ENCODE measurements at regions of chr2 and their contacts with region 1.

Region 1: DNA sequence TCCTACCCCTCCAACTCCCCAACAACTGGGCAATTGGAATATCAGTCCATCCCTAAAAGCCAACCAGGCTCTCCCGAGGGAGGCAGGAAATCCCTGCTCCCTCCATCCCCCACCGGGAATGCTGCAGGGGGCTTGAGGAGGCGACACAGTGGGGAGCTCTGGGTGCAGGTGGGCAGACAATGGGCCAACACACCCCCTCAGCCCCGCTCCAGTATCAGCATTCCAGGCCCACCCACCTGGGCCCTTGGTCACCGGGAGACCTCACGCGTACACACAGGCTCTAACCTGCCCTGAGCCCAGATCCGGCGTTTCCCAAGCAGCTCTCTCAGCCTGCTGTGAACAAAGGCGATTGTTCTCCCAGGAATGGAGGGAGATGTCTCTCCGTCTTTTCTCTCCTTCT is 37.6 kb upstream of the FZD7 start:
- DNase-seq: peak; percentile 79 to 94
- H3K4me3 ChIP-seq: peak overlapping the region in 1 of 4 experiments; percentile 26; a peak in 1 of 8 replicates
- H3K27ac ChIP-seq: peak overlapping the region; percentile 58
- H3K4me1 ChIP-seq: peaks cover 9 to 24% (median 22%) of the 10 kb centered on the region in 4 experiments
- H3K27me3 ChIP-seq: no peaks in the 10 kb centered on the region; a peak in 1 of 7 replicates
- CTCF ChIP-seq: no peak
- EP300 ChIP-seq: peak; percentile 52 to 95; a peak in 2 of 3 replicates
- POLR2A ChIP-seq: no peak
- RAD21 ChIP-seq: peak in 1 of 2 experiments; percentile 9; a peak in 1 of 4 replicates

Region 2: DNA sequence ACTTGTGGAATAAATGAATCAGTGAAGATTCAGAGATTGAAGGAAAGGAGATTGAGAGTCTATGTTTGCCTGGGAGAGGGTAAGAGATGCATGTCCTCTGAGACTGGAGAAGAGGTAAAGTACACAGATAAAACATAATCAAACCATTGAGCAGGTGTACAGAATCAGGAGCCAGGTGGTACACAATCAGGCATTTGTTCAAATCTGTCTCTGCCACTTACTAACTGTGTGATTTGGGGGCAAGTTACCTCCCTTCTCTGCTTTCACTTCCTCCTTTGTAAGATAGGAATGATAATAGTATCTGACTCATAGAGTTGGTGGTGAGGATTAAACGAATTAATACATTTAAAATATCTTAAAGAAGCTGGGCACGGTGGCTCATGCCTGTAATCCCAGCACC is 95.6 kb before region 1 on chr2:
- CTCF ChIA-PET with region 1: no interaction called
- POLR2A ChIA-PET with region 1: no interaction called
- DNase-seq: no peak
- H3K4me3 ChIP-seq: no peak overlapping the region
- H3K27ac ChIP-seq: no peak overlapping the region
- H3K4me1 ChIP-seq: peaks cover 5 to 9% (median 7%) of the 10 kb centered on the region in 4 experiments; a peak in 4 of 7 replicates
- H3K27me3 ChIP-seq: no peaks in the 10 kb centered on the region
- CTCF ChIP-seq: no peak
- EP300 ChIP-seq: no peak
- POLR2A ChIP-seq: no peak
- RAD21 ChIP-seq: no peak

Region 3: GRCh38 chr2:202023198-202023903 is 27.3 kb after region 1 on chr2:
- CTCF ChIA-PET with region 1: interaction called, 7 read pairs
- POLR2A ChIA-PET with region 1: interaction called, 18 read pairs
- DNase-seq: peak; percentile 71 to 84
- H3K4me3 ChIP-seq: peak overlapping the region in 1 of 4 experiments; percentile 44; a peak in 2 of 8 replicates
- H3K27ac ChIP-seq: peak overlapping the region; percentile 66; the same call in 1 of the 2 replicates
- H3K4me1 ChIP-seq: peaks cover 13 to 28% (median 25%) of the 10 kb centered on the region in 4 experiments
- H3K27me3 ChIP-seq: peaks cover 0 to 3% (median 0%) of the 10 kb centered on the region in 4 experiments; a peak in 3 of 7 replicates
- CTCF ChIP-seq: peak in 2 of 3 experiments; percentile 2 to 16; a peak in 1 of 4 replicates
- EP300 ChIP-seq: peak in 1 of 2 experiments; percentile 64; a peak in 1 of 3 replicates
- POLR2A ChIP-seq: no peak
- RAD21 ChIP-seq: peak; percentile 9 to 35; a peak in 2 of 4 replicates

Region 4: DNA sequence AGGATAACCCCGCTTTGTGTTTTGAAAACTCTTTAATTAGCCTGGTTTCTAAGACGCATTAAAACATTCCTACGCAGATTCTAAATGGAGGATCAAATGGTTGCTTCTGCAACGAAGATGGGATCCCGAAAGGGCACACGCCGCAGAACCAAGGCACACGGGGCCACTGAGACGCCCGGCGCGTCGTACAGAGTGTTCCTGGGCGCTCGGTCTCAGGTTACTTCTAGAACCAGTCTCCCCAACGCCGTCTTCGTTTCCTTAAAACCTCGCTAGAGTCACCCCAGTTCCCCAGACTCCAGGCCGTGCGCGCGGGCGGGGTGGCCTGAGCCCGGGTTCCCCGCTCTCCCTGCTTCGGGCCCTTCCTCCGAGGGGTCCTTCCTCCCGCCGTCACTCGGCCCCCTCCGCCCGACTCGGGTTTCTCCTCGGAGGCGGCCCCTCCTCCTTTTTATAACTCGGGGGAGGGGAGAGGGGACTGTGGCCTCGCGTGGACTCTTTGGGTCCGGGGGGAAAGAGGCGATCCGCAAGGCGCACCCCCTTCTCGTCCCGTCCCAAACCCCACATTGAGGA is 36.8 kb after region 1 on chr2:
- CTCF ChIA-PET with region 1: interaction called, 3 read pairs
- POLR2A ChIA-PET with region 1: interaction called, 21 read pairs
- DNase-seq: peak in 1 of 2 experiments; percentile 84
- H3K4me3 ChIP-seq: peak overlapping the region; percentile 85 to 98 (median 98)
- H3K27ac ChIP-seq: peak overlapping the region; percentile 96
- H3K4me1 ChIP-seq: peaks cover 4 to 14% (median 6%) of the 10 kb centered on the region in 4 experiments
- H3K27me3 ChIP-seq: no peaks in the 10 kb centered on the region
- CTCF ChIP-seq: no peak
- EP300 ChIP-seq: peak in 1 of 2 experiments; percentile 71; a peak in 1 of 3 replicates
- POLR2A ChIP-seq: peak in 1 of 2 experiments; percentile 80; a peak in 2 of 3 replicates
- RAD21 ChIP-seq: no peak

Measured in H1 (cell line).